ENCODE measurements at regions of chr20 and their contacts with region 1.

Region 1: DNA sequence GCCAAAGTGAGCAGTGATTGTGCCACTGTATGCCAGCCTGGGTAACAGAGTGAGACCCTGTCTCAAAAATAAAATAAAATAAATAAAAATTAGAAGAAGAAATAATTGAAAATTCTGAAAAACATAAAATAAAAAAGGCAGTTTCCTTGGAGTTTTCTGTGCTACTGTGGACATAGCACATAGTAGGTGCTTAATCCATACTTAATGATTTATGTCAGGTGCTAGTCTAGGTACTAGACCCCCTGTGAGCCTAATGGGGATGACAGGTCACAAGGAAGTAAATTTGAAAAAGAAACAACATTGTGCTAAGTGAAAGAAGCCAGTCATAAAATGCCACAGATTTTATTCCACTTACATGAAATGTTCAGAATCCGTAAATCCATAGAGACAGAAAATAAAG is 9.2 kb upstream of the SLC9A8 start:
- DNase-seq: no peak
- H3K4me3 Mint-ChIP-seq: no peak overlapping the region
- H3K27ac Mint-ChIP-seq: peak overlapping the region; percentile 51
- H3K4me1 Mint-ChIP-seq: peaks cover 54% of the 10 kb centered on the region
- H3K27me3 Mint-ChIP-seq: peaks cover 3% of the 10 kb centered on the region

Region 2: DNA sequence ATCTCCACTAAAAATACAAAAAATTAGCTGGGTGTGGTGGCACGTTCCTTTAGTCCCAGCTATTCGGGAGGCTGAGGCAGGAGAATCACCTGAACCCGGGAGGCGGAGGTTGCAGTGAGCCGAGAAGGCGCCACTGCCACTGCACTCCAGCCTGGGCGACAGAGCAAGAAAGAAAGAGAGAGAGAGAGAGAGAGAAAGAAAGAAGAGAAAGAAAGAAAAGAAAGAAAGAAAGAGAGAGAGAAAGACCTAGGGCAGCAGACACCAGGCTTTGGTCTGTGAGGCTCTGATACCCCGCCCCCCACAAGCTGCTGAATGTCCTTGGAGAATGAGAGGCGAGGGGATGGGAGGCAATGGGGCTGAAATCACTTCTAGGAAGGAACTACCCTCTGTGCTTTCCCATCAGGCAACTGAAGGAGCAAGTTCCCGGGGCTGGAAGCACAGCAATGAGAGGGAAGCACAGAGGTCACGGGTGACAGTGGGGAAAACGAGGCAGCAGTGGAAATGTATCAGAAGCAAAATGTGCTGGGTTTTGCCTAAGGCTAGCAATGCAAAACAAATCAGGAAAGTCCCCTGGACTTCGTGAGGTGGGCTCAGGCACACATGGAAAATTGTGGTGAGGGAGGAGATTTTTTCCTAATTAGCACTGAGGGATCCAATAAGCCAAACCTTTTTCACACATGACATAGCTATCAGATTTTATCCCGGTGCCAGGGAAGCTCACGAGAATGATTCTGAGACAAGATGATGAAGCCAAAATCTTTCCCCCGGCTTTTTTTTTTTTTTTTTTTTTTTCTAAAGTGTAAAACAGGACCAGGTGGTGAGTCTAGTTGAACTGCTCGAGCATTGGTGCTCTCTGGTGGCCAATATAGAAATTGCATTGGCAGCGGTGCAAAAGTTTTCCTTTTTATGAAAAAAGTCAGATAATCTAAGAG is 898.8 kb before region 1 on chr20:
- intact Hi-C with region 1: no loop called
- DNase-seq: peak; percentile 91
- H3K4me3 Mint-ChIP-seq: no peak overlapping the region
- H3K27ac Mint-ChIP-seq: no peak overlapping the region
- H3K4me1 Mint-ChIP-seq: peaks cover 9% of the 10 kb centered on the region
- H3K27me3 Mint-ChIP-seq: peaks cover 4% of the 10 kb centered on the region

Region 3: GRCh38 chr20:49768204-49769047 is 35.0 kb before region 1 on chr20:
- intact Hi-C with region 1: loop called (anchors 2 kb)
- DNase-seq: peak; percentile 88
- H3K4me3 Mint-ChIP-seq: peak overlapping the region; percentile 56
- H3K27ac Mint-ChIP-seq: peak overlapping the region; percentile 43
- H3K4me1 Mint-ChIP-seq: peaks cover 33% of the 10 kb centered on the region
- H3K27me3 Mint-ChIP-seq: peaks cover 40% of the 10 kb centered on the region

Region 4: GRCh38 chr20:49865559-49865958 is 62.1 kb after region 1 on chr20:
- intact Hi-C with region 1: no loop called
- DNase-seq: no peak
- H3K4me3 Mint-ChIP-seq: no peak overlapping the region
- H3K27ac Mint-ChIP-seq: no peak overlapping the region
- H3K4me1 Mint-ChIP-seq: peaks cover 16% of the 10 kb centered on the region
- H3K27me3 Mint-ChIP-seq: no peaks in the 10 kb centered on the region

Region 5: DNA sequence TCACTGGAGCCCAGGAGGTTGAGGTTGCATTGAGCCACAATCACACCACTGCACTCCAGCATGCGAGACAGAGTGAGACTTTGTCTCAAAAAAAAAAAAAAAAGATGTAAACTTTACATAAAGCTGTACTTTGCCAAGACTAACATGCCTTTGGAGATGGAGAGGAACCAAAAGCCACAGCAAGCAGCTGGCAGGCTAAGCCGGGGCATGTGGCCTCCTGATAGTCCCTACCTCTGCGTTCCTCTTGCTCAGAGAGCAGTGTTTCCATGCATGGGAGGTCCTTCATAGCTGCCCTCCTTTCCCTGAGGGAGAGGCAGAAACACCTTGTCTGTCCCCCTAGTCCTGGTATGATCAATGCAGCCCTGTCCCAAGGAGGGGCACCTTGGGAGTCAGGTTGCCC is 76.8 kb after region 1 on chr20:
- intact Hi-C with region 1: no loop called
- DNase-seq: no peak
- H3K4me3 Mint-ChIP-seq: no peak overlapping the region
- H3K27ac Mint-ChIP-seq: no peak overlapping the region
- H3K4me1 Mint-ChIP-seq: no peaks in the 10 kb centered on the region
- H3K27me3 Mint-ChIP-seq: no peaks in the 10 kb centered on the region

Measured in activated CD4-positive, alpha-beta T cell treated with anti-CD3 and anti-CD28 coated beads, Interleukin-2, amount 10 ng/mL, durations not matched to agents 24 days and 14 days (primary cell).